CD8-positive, alpha-beta T cell (primary cell): ENCODE measurements at regions of chr14 and their contacts with region 1.

Region 1: DNA sequence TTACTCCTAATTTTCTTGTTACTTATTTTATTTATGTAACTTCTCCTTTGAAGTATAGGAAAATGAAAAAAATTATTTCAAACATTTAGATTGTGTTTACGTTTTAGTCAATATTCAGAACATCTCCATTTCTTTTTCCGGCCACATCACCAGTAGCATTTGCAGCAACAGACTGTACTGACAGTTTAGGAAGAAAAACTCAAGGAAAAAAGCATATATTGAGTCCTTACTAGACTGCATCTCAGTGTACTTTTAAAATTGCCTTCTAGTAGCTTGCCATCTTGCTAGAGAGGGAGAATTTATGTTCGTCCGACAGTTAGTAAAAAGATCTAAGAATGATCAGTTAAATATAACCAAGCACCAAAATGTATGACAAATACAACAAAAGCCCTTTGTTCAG is 625.0 kb upstream of the MIS18BP1 start:
- DNase-seq: no peak
- ATAC-seq: no peak
- H3K4me3 ChIP-seq: no peak overlapping the region
- H3K4me3 Mint-ChIP-seq: no peak overlapping the region
- H3K27ac ChIP-seq: no peak overlapping the region
- H3K27ac Mint-ChIP-seq: no peak overlapping the region
- H3K4me1 ChIP-seq: no peaks in the 10 kb centered on the region
- H3K4me1 Mint-ChIP-seq: no peaks in the 10 kb centered on the region
- H3K27me3 ChIP-seq: no peaks in the 10 kb centered on the region
- H3K27me3 Mint-ChIP-seq: no peaks in the 10 kb centered on the region
- CTCF ChIP-seq: no peak

Region 2: DNA sequence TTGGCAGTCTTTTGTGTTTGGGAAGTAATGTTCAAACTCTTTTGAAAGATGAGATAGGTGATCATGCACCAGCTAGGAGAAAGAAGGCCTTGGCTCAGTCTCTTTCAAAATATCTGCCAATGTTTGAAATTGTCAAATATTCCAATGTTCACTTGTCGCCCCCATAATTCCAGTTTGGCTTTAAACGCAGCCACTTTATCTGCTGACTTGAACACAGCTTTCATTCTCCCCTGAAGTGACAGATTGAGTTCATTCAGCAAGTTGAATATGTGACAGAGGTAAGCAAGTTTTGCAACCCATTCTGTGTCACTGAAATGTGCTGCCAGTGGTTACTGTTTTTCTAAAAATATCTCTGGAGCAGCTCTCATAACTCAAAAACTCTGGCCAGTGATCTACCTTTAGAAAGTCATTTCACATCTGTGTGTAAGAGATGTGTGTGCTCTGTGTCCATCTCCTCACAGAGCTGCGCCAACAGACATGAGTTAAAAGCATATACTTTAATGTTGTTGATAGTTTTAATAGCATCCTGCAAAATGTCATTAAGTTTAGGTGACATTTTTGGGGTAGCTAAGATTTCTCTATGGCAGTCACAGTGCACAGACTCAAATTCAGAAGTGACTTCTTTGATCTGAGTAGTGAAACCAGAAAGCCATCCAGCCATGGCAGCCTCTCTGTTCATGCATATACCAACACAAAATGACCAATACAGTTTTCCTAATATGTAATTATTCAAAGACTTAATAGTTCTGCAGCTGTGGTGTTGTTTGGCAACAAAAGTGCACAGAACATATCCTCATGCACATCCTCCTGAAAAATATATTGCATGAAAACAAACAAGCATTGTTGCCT is 10.7 kb before region 1 on chr14:
- CTCF ChIA-PET with region 1: no interaction called
- POLR2A ChIA-PET with region 1: no interaction called
- intact Hi-C with region 1: no loop called
- DNase-seq: no peak
- ATAC-seq: no peak
- H3K4me3 ChIP-seq: no peak overlapping the region
- H3K4me3 Mint-ChIP-seq: no peak overlapping the region
- H3K27ac ChIP-seq: no peak overlapping the region
- H3K27ac Mint-ChIP-seq: no peak overlapping the region
- H3K4me1 ChIP-seq: no peaks in the 10 kb centered on the region
- H3K4me1 Mint-ChIP-seq: no peaks in the 10 kb centered on the region
- H3K27me3 ChIP-seq: no peaks in the 10 kb centered on the region
- H3K27me3 Mint-ChIP-seq: no peaks in the 10 kb centered on the region
- CTCF ChIP-seq: no peak

Region 3: GRCh38 chr14:46769292-46769691 is 891.3 kb after region 1 on chr14:
- CTCF ChIA-PET with region 1: no interaction called
- POLR2A ChIA-PET with region 1: no interaction called
- intact Hi-C with region 1: loop called in 1 of 2 experiments (anchors 5 kb)
- DNase-seq: no peak
- ATAC-seq: no peak
- H3K4me3 ChIP-seq: no peak overlapping the region
- H3K4me3 Mint-ChIP-seq: no peak overlapping the region
- H3K27ac ChIP-seq: no peak overlapping the region
- H3K27ac Mint-ChIP-seq: no peak overlapping the region
- H3K4me1 ChIP-seq: no peaks in the 10 kb centered on the region
- H3K4me1 Mint-ChIP-seq: no peaks in the 10 kb centered on the region
- H3K27me3 ChIP-seq: no peaks in the 10 kb centered on the region
- H3K27me3 Mint-ChIP-seq: no peaks in the 10 kb centered on the region
- CTCF ChIP-seq: no peak